ENCODE measurements at regions of chr10 and their contacts with region 1.

Region 1: GRCh38 chr10:3902054-3902808 is 117.2 kb upstream of the KLF6 start:
- DNase-seq: no peak
- ATAC-seq: no peak
- H3K4me3 ChIP-seq: no peak overlapping the region
- H3K27ac ChIP-seq: peak overlapping the region; percentile 6; the same call in 1 of the 2 replicates
- H3K4me1 ChIP-seq: peaks cover 10% of the 10 kb centered on the region
- H3K27me3 ChIP-seq: no peaks in the 10 kb centered on the region
- CTCF ChIP-seq: no peak
- POLR2A ChIP-seq: no peak
- RAD21 ChIP-seq: no peak

Region 2: DNA sequence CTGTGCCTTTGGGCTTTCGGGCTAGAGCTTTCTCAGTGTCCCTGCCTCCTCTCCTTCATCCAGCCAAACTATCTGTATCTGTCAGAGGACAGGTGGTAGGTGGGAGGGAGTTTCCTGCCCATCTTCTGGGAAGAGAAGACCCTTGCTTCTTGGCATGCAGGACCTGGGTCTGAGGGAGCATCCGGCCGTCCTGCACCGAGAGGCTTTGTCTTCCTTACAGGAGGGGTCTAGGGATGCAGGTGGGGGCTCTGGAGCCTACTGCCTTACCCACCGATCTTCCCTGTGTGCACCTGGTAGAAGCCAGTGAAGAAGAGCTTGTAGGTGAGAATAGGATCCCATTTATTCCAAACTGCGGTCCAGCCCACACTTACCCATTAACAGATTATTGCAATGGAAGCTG is 111.4 kb before region 1 on chr10:
- CTCF ChIA-PET with region 1: no interaction called
- POLR2A ChIA-PET with region 1: interaction called, 17 read pairs
- dilution Hi-C with region 1: no loop called
- in situ Hi-C with region 1: no loop called
- intact Hi-C with region 1: no loop called
- DNase-seq: no peak
- ATAC-seq: no peak
- H3K4me3 ChIP-seq: no peak overlapping the region
- H3K27ac ChIP-seq: no peak overlapping the region
- H3K4me1 ChIP-seq: peaks cover 7% of the 10 kb centered on the region
- H3K27me3 ChIP-seq: no peaks in the 10 kb centered on the region
- CTCF ChIP-seq: no peak
- POLR2A ChIP-seq: no peak
- RAD21 ChIP-seq: no peak

Region 3: GRCh38 chr10:3852147-3852904 is 49.9 kb before region 1 on chr10:
- CTCF ChIA-PET with region 1: no interaction called
- POLR2A ChIA-PET with region 1: no interaction called
- dilution Hi-C with region 1: no loop called
- in situ Hi-C with region 1: no loop called
- intact Hi-C with region 1: loop called (anchors 1 kb)
- DNase-seq: peak; percentile 99
- ATAC-seq: peak; percentile 88
- H3K4me3 ChIP-seq: no peak overlapping the region
- H3K27ac ChIP-seq: peak overlapping the region; percentile 85
- H3K4me1 ChIP-seq: peaks cover 19% of the 10 kb centered on the region
- H3K27me3 ChIP-seq: no peaks in the 10 kb centered on the region
- CTCF ChIP-seq: no peak
- POLR2A ChIP-seq: peak; percentile 12
- RAD21 ChIP-seq: no peak; the same call in 1 of the 2 replicates

Region 4: GRCh38 chr10:3961082-3961481 is 58.9 kb after region 1 on chr10:
- CTCF ChIA-PET with region 1: no interaction called
- POLR2A ChIA-PET with region 1: no interaction called
- dilution Hi-C with region 1: no loop called
- in situ Hi-C with region 1: no loop called
- intact Hi-C with region 1: no loop called
- DNase-seq: no peak
- ATAC-seq: no peak
- H3K4me3 ChIP-seq: no peak overlapping the region
- H3K27ac ChIP-seq: no peak overlapping the region
- H3K4me1 ChIP-seq: no peaks in the 10 kb centered on the region
- H3K27me3 ChIP-seq: no peaks in the 10 kb centered on the region
- CTCF ChIP-seq: no peak
- POLR2A ChIP-seq: no peak
- RAD21 ChIP-seq: no peak